ENCODE measurements at regions of chr2 and their contacts with region 1.

Region 1: DNA sequence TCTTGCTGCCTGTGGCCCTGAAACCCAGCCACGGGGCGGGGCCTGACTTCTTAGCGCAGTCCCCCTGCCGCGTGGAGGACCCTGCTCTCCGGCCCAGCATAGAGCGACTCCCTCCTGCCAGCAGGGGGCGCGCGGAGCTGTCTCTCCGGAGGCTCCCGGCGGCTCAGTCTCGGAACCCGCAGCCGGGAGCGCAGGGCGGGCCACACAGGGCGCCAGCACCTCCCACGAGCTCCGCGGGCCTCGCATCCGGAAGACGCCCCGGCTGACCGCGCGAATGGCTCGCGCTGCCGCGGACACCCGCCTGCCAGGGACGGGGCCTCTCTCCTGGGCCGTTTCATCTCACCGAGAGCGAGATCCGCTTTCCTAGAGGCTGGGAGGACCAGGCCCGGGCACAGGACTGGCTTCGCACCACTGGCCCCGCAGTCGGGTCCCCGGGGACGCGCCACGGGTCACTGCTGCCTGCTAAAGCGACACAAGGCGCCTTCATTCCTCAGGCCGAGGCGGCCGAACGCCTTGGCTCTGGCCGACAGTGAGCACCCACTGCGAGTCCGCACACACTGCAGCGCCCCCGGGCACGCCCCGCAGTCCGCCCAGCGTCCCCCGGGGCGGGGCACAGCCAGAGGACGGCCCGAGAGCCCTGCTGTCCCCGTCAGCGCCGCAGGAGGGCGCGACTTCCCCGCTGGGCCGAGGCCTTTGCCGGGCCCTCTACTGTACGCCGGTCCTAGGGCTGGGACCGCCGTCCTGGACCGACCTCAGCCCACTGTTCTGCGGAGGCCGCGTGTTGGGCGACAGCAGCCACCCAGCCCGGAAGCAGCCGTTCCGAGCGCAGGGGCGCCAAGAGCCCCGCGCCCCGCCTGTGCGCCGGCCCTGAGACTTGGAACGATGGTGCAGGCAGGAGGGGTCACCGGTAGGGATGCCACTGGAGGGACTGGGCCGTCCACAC is 39.0 kb upstream of the ARHGEF4 start:
- DNase-seq: peak; percentile 33
- H3K4me3 ChIP-seq: peak overlapping the region; percentile 60 to 94 (median 72)
- H3K27ac ChIP-seq: peak overlapping the region; percentile 93 to 99 (median 95)
- H3K4me1 ChIP-seq: peaks cover 11 to 22% (median 14%) of the 10 kb centered on the region in 3 donors
- H3K27me3 ChIP-seq: no peaks in the 10 kb centered on the region
- CTCF ChIP-seq: peak; percentile 80 to 99 (median 94)
- POLR2A ChIP-seq: peak in 2 of 4 donors; percentile 31 to 38

Region 2: DNA sequence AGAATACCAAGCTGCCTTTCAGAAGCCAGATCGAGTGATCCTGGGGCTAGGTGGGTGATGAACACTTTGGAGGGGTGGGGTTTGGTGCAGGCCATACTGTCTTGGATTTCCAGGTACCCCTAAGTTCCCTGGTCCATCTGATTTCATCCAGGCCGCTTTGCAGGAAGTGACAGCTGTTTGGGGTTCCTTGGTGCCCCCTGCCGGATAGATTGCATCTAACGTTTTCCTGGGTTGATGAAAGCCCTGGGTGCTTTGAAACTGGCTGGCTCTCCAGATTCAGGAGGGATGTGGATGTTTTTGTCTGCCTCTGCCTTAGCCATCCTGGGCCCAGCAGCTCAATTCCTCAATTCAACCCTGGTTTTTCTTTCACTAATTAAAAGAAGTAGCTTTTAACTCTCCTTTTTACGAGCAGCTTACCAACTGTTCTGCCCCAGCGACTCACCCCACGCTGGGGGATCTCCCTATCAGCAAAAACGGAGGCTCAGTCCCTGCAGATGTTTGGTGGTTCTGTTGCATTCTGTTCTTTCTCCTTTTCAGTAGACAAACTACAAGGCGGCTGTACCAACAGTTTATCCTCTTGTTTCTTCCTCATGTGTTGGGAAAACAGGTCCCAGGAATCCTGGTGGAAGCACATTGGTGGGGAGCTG is 76.1 kb after region 1 on chr2:
- intact Hi-C with region 1: loop called (anchors 5 kb)
- DNase-seq: no peak
- H3K4me3 ChIP-seq: no peak overlapping the region
- H3K27ac ChIP-seq: peak overlapping the region in 1 of 4 donors; percentile 48
- H3K4me1 ChIP-seq: peaks cover 0 to 55% (median 13%) of the 10 kb centered on the region in 3 donors
- H3K27me3 ChIP-seq: no peaks in the 10 kb centered on the region
- CTCF ChIP-seq: peak; percentile 38 to 72 (median 60)
- POLR2A ChIP-seq: no peak

Region 3: DNA sequence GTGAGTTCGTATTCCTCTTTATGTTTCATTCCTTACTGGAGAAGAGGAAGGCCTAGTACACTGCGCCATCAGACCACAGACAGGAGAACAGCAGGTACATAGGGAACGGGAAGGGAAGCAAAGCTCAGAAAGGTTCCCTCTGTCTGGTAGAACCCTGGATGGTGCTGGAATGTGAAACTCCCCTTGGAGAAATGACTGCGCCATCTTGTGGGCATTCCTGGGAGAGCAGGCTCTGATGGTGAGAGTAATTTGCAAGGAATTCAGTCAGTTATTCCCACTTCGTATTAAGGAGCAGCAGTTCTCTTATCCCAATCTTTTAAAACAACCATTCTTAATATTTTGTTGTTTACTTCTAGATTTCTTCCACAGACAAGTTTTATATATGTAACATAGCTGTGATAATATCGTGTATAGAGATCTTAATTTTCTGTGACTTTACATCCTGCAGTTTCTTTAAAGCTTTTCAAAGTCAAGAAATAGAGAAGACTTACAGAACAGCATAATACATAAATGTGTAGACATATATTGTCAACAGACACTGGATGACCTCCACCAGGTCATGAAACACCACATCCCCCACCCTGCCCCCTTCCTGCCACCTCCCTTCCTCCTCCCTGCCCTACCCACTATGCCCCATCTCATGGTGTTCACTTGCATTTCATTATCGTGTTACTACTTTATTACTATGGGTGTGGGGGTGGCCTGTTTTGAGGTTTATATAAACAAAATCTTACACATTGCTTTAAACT is 122.8 kb after region 1 on chr2:
- intact Hi-C with region 1: loop called (anchors 5 kb)
- DNase-seq: no peak
- H3K4me3 ChIP-seq: no peak overlapping the region
- H3K27ac ChIP-seq: peak overlapping the region in 2 of 4 donors; percentile 7 to 63
- H3K4me1 ChIP-seq: peaks cover 3 to 34% (median 4%) of the 10 kb centered on the region in 3 donors
- H3K27me3 ChIP-seq: peaks cover 0 to 19% (median 0%) of the 10 kb centered on the region in 4 donors
- CTCF ChIP-seq: peak in 5 of 6 experiments; percentile 83 to 94 (median 85)
- POLR2A ChIP-seq: no peak

Measured in esophagus squamous epithelium (tissue), 5 donors.